Panc1 (cell line): ENCODE measurements at regions of chr10 and their contacts with region 1.

Region 1: DNA sequence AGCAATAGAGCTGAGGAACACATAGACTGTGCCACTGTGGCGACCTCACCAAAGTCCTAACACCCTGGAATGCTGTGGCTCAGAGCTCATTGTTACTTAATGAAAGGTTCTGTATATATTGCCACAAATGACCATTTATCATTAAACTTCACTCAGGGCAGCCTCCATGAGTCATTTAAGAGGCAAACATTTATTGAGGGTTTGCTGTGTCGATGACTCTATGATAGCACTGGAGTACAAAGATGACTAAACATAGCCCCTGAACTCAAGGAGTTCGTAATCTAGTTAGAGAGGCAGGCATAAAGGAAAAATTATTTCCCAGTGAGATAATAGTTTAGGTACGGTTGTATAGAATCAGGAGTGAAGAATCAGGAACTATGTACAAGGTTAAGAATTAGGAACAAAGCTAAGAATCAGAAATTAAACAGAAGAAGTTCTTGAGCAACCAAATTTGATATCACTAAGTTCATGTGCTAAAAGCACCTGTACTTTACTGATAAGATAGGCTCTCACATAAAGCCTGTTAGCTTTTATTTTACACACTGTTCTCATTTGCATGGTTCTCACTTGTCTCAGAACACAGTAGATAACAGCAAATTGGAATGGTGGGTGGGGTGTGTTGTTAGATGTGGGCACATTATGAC is 7.9 kb downstream of the ENTPD7 start:
- DNase-seq: no peak
- ATAC-seq: peak; percentile 53
- H3K4me3 ChIP-seq: no peak overlapping the region
- H3K27ac ChIP-seq: no peak overlapping the region
- H3K4me1 ChIP-seq: no peaks in the 10 kb centered on the region
- H3K27me3 ChIP-seq: no peaks in the 10 kb centered on the region
- CTCF ChIP-seq: no peak

Region 2: GRCh38 chr10:100254191-100254590 is 587.0 kb after region 1 on chr10:
- CTCF ChIA-PET with region 1: no interaction called
- POLR2A ChIA-PET with region 1: interaction called, 12 read pairs
- in situ Hi-C with region 1: no loop called
- intact Hi-C with region 1: no loop called
- DNase-seq: no peak
- ATAC-seq: no peak
- H3K4me3 ChIP-seq: no peak overlapping the region
- H3K27ac ChIP-seq: no peak overlapping the region
- H3K4me1 ChIP-seq: no peaks in the 10 kb centered on the region
- H3K27me3 ChIP-seq: no peaks in the 10 kb centered on the region
- CTCF ChIP-seq: no peak